SK-N-SH (cell line): ENCODE measurements at regions of chr1 and their contacts with region 1.

Region 1: GRCh38 chr1:12619792-12620487 is 1.9 kb upstream of the DHRS3 start:
- DNase-seq: peak; percentile 88
- H3K4me3 ChIP-seq: peak overlapping the region in 1 of 2 experiments; percentile 15; a peak in 2 of 4 replicates
- H3K27ac ChIP-seq: peak overlapping the region; percentile 70 to 79
- H3K4me1 ChIP-seq: peaks cover 29 to 37% of the 10 kb centered on the region in 2 experiments; a peak in 3 of 4 replicates
- H3K27me3 ChIP-seq: no peaks in the 10 kb centered on the region
- CTCF ChIP-seq: peak; percentile 93
- EP300 ChIP-seq: no peak
- RAD21 ChIP-seq: peak; percentile 99

Region 2: GRCh38 chr1:12314333-12314903 is 305.5 kb before region 1 on chr1:
- CTCF ChIA-PET with region 1: interaction called, 135 read pairs
- POLR2A ChIA-PET with region 1: no interaction called
- DNase-seq: peak; percentile 28
- H3K4me3 ChIP-seq: no peak overlapping the region
- H3K27ac ChIP-seq: no peak overlapping the region; a peak in 1 of 4 replicates
- H3K4me1 ChIP-seq: no peaks in the 10 kb centered on the region; a peak in 2 of 4 replicates
- H3K27me3 ChIP-seq: no peaks in the 10 kb centered on the region
- CTCF ChIP-seq: peak; percentile 75
- EP300 ChIP-seq: no peak
- RAD21 ChIP-seq: peak; percentile 77

Region 3: DNA sequence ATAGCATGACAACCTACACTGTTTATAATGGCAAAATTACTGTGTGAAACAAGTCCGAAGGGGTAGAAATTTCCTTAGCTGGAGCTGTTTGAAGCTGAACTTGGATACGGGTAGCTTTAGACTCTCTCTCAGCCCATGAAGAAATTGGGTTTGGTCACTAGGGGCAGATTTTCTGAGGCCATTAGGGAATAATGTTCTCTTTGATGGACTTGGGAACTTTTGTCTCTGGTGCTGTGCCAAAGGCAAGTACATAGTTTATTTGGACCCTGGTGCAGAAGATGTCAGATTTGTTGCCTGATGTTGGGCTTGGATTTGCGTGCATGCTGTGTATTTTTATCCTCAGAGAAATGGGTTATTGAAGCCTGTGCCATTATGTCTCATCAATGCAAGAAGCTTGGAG is 280.5 kb before region 1 on chr1:
- CTCF ChIA-PET with region 1: interaction called, 31 read pairs
- POLR2A ChIA-PET with region 1: no interaction called
- DNase-seq: peak; percentile 28
- H3K4me3 ChIP-seq: no peak overlapping the region
- H3K27ac ChIP-seq: peak overlapping the region in 1 of 2 experiments; percentile 96; a peak in 2 of 4 replicates
- H3K4me1 ChIP-seq: peaks cover 0 to 31% of the 10 kb centered on the region in 2 experiments; a peak in 2 of 4 replicates
- H3K27me3 ChIP-seq: no peaks in the 10 kb centered on the region
- CTCF ChIP-seq: no peak
- EP300 ChIP-seq: no peak
- RAD21 ChIP-seq: 0 out of 2 replicates have a peak, but pooled peaks have one; percentile 23

Region 4: DNA sequence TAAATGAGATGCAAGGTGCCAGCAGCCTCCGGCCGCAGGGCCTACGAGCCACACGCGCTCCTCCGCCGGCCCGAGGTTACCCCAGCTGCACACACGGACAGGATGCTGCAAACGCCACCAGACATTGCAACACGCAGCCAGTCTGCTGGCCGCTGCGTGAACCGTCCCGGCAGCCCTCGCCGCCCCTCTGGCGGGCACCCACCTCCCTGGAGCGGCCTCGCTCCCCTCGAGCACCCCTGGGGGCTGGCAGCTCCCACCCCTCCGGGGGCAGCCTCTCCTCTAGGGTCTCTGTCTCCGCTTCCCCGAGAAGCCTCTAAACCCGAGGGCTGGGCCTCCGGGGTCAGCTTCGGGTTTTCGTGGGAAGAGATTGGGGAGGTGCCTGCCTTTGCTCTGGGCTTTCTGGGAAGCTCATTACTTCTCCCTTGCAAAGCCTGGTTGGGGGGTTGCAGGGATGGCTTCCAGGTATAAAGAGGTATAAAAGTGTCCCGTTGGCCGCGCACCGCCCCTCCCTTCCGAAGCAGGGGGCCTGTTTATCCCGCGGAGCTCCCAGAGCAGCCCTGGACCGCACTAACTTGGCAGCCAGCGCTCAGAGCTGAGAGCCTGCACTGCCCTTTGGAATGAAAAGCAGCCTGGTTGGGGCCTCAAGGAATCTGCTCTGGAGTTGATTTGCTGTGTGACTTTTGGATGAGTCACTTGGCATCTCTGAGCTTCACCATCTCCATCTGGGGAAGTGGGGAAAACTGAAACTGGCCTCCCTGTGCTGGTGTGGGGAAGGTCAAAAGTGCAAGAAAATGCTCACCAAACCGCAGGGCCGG is 23.7 kb before region 1 on chr1:
- CTCF ChIA-PET with region 1: interaction called, 10 read pairs
- POLR2A ChIA-PET with region 1: interaction called, 4 read pairs
- DNase-seq: peak; percentile 91
- H3K4me3 ChIP-seq: peak overlapping the region; percentile 1 to 43; a peak in 3 of 4 replicates
- H3K27ac ChIP-seq: peak overlapping the region; percentile 88
- H3K4me1 ChIP-seq: peaks cover 13 to 55% of the 10 kb centered on the region in 2 experiments; a peak in 3 of 4 replicates
- H3K27me3 ChIP-seq: no peaks in the 10 kb centered on the region
- CTCF ChIP-seq: no peak
- EP300 ChIP-seq: peak; percentile 62 to 96
- RAD21 ChIP-seq: peak; percentile 4; the same call in 1 of the 2 replicates

Region 5: DNA sequence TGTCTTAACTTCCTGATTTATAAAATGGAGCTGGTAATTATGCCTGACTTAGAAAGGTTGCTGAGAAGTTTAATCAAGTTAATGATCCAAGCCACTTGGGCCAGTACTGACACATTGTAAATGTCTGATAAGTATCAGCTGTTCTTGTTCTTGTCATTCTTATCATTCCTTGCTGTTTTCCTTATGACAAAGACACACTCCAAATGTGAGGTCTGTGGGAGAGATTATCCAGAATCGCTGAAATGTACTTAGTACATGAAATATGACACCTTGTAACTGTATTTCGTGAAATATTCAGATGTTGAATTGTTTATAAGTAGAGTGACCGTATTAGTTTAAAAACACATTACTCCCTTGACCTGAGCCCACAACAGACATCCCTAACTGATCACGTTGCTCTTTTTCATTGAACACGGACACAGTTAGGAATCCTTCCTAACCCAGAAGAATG is 30.1 kb after region 1 on chr1:
- CTCF ChIA-PET with region 1: interaction called, 13 read pairs
- POLR2A ChIA-PET with region 1: no interaction called
- DNase-seq: no peak
- H3K4me3 ChIP-seq: no peak overlapping the region; a peak in 1 of 4 replicates
- H3K27ac ChIP-seq: peak overlapping the region in 1 of 2 experiments; percentile 43; a peak in 1 of 4 replicates
- H3K4me1 ChIP-seq: peaks cover 0 to 5% of the 10 kb centered on the region in 2 experiments; a peak in 1 of 4 replicates
- H3K27me3 ChIP-seq: no peaks in the 10 kb centered on the region; the same call in 1 of the 2 replicates
- CTCF ChIP-seq: no peak
- EP300 ChIP-seq: peak; percentile 11 to 67; a peak in 3 of 4 replicates
- RAD21 ChIP-seq: no peak

Region 6: GRCh38 chr1:12703821-12704451 is 84.0 kb after region 1 on chr1:
- CTCF ChIA-PET with region 1: no interaction called
- POLR2A ChIA-PET with region 1: no interaction called
- DNase-seq: no peak
- H3K4me3 ChIP-seq: no peak overlapping the region
- H3K27ac ChIP-seq: no peak overlapping the region
- H3K4me1 ChIP-seq: no peaks in the 10 kb centered on the region
- H3K27me3 ChIP-seq: no peaks in the 10 kb centered on the region
- CTCF ChIP-seq: no peak
- EP300 ChIP-seq: no peak
- RAD21 ChIP-seq: no peak